Mammary epithelial cell (primary cell): ENCODE measurements at regions of chr11 and their contacts with region 1.

Region 1: DNA sequence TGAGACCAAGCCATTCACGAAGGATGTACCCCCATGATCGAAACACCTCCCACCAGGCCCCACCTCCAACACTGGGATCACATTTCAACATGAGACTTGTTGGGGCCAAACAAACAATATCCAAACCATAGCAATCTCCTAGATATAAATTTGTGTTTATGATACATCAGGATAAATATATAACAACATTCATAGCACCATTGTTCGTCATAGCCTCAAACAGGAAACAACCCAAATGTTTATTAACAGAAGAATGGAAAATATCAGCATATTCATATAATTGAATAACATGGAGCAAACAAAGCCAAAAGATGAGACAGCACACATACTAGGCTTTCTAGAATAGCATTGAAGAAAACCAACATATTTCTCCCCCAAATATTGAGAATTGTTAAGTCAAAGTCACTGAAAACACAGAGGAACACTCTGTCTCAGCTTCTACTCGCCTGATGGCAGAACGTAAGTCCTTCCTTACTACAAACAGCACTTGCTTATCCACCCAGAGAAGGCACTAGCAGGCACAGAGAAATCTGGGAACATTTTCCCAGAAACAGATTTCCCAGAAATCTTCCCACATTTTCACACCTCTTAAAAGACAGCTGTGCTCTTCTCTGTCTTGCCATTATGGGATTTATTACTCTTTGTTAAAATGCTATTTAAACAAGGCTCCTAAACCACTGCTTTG is 8.1 kb upstream of the GDPD4 start:
- DNase-seq: no peak
- H3K4me3 ChIP-seq: no peak overlapping the region
- H3K27ac ChIP-seq: no peak overlapping the region
- H3K4me1 ChIP-seq: no peaks in the 10 kb centered on the region
- H3K27me3 ChIP-seq: no peaks in the 10 kb centered on the region
- CTCF ChIP-seq: no peak

Region 2: GRCh38 chr11:77073328-77074001 is 236.1 kb before region 1 on chr11:
- CTCF ChIA-PET with region 1: no interaction called
- dilution Hi-C with region 1: no loop called
- in situ Hi-C with region 1: no loop called
- intact Hi-C with region 1: no loop called
- DNase-seq: peak; percentile 66
- H3K4me3 ChIP-seq: no peak overlapping the region
- H3K27ac ChIP-seq: no peak overlapping the region
- H3K4me1 ChIP-seq: peaks cover 12% of the 10 kb centered on the region
- H3K27me3 ChIP-seq: no peaks in the 10 kb centered on the region
- CTCF ChIP-seq: no peak

Region 3: DNA sequence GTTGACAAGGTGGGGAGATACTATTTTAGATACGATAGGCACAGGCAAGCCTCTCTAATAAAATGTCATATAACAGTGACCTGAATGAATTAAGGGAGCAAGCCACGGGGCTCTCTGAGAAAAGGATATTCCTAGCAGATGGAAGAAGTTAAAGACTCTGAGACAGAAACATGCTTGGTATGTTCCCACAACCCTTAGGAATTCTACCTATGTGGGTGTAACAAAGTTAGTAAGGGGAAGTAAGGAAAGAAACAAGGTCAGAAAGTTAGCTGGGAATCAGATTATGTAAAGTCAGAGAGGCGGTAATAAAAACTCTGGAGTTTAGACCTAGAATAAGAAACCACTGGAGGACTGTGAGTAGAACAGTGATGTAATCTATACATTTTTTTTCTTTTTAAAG is 51.6 kb after region 1 on chr11:
- CTCF ChIA-PET with region 1: no interaction called
- dilution Hi-C with region 1: loop called (anchors 10 kb)
- in situ Hi-C with region 1: no loop called
- intact Hi-C with region 1: no loop called
- DNase-seq: peak; percentile 25
- H3K4me3 ChIP-seq: no peak overlapping the region
- H3K27ac ChIP-seq: no peak overlapping the region
- H3K4me1 ChIP-seq: no peaks in the 10 kb centered on the region
- H3K27me3 ChIP-seq: no peaks in the 10 kb centered on the region
- CTCF ChIP-seq: no peak

Region 4: GRCh38 chr11:77506857-77507256 is 197.3 kb after region 1 on chr11:
- CTCF ChIA-PET with region 1: interaction called, 10 read pairs
- dilution Hi-C with region 1: no loop called
- in situ Hi-C with region 1: no loop called
- intact Hi-C with region 1: no loop called
- DNase-seq: peak; percentile 91
- H3K4me3 ChIP-seq: peak overlapping the region in 1 of 3 experiments; percentile 21
- H3K27ac ChIP-seq: no peak overlapping the region
- H3K4me1 ChIP-seq: peaks cover 40% of the 10 kb centered on the region
- H3K27me3 ChIP-seq: no peaks in the 10 kb centered on the region
- CTCF ChIP-seq: no peak